H1 (cell line): ENCODE measurements at regions of chr1 and their contacts with region 1.

Region 1: DNA sequence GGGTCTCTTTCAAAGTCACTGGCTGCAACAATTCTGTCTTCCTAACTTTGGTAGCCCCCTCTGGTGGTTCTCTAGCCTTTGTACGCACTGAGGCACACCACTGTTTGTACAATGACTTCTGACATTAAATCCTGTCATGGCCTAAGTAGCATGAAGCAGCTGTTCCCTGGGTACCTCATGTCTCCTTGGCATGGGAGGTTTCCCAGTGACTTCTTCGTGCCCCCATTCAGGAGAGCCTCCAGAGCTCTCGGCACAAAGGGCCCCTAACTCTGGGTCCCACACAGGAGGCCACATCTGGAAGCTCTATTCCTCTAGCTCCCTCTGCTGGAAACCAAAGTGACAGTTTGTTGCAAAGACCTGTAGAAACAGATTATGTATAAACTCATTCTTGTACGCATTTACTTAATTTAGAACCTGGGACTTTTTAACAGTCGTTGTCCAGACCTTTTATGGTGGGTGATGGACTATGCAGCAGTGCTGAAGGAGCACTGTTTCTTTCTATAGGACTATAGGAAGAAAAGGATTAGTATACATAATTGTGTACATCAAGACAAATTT is 13.4 kb downstream of the SWT1 start:
- DNase-seq: peak; percentile 33 to 65
- H3K4me3 ChIP-seq: no peak overlapping the region
- H3K27ac ChIP-seq: no peak overlapping the region
- H3K4me1 ChIP-seq: peaks cover 0 to 5% (median 0%) of the 10 kb centered on the region in 4 experiments; a peak in 2 of 7 replicates
- H3K27me3 ChIP-seq: no peaks in the 10 kb centered on the region
- CTCF ChIP-seq: peak; percentile 35 to 63 (median 61)
- EP300 ChIP-seq: no peak
- POLR2A ChIP-seq: no peak
- RAD21 ChIP-seq: peak; percentile 58 to 73

Region 2: GRCh38 chr1:184805667-184806295 is 364.6 kb before region 1 on chr1:
- CTCF ChIA-PET with region 1: interaction called, 51 read pairs
- POLR2A ChIA-PET with region 1: no interaction called
- DNase-seq: peak; percentile 69 to 91
- H3K4me3 ChIP-seq: no peak overlapping the region
- H3K27ac ChIP-seq: no peak overlapping the region
- H3K4me1 ChIP-seq: no peaks in the 10 kb centered on the region
- H3K27me3 ChIP-seq: no peaks in the 10 kb centered on the region
- CTCF ChIP-seq: peak; percentile 87 to 96 (median 93)
- EP300 ChIP-seq: no peak
- POLR2A ChIP-seq: no peak
- RAD21 ChIP-seq: peak; percentile 98 to 100

Region 3: DNA sequence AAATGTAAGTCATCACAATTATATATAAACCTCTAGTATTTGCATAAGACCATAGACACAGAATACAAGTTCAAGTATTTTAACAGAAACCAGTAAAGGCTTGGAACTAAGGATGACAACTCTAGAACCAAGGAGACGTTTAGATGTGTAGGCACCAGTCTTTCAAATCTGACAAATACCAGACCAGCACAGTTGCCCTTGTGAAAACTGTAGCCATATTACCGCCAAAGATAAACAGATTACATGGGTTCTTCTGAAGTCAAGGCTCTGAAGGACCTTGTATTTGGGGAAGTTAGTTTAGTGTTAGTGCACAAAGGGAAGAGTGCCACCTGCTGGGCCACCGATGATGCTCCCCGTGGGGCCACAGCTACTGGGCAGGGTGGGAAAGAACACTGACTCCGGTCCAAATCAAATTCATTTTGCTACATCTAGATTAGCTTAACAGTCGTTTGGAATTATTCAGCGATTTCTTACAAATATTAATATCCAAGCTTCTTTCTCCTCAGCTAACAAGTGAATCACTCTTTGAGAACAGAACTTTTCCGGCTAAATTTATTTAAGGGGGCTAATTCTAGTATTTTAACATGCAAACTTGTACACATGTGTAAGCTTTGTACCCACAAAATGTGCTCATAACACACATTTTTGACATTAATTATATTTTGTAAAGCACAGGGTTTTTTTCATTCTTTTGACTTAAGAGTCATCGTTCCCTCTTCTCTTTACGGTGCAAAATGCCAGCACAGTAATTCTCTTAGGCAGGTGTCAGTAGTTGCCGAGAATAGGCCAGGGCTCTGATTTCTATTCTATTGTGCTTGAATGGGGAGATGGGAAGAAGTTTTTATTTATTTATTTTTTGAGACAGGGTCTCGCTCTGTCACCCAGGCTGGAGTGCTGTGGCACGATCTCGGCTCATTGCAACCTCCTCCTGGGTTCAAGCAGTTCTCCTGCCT is 188.1 kb before region 1 on chr1:
- CTCF ChIA-PET with region 1: interaction called, 12 read pairs
- POLR2A ChIA-PET with region 1: no interaction called
- DNase-seq: peak in 1 of 2 experiments; percentile 75
- H3K4me3 ChIP-seq: no peak overlapping the region
- H3K27ac ChIP-seq: no peak overlapping the region
- H3K4me1 ChIP-seq: no peaks in the 10 kb centered on the region
- H3K27me3 ChIP-seq: no peaks in the 10 kb centered on the region
- CTCF ChIP-seq: peak; percentile 74 to 82 (median 80)
- EP300 ChIP-seq: no peak
- POLR2A ChIP-seq: no peak
- RAD21 ChIP-seq: peak; percentile 88 to 94

Region 4: DNA sequence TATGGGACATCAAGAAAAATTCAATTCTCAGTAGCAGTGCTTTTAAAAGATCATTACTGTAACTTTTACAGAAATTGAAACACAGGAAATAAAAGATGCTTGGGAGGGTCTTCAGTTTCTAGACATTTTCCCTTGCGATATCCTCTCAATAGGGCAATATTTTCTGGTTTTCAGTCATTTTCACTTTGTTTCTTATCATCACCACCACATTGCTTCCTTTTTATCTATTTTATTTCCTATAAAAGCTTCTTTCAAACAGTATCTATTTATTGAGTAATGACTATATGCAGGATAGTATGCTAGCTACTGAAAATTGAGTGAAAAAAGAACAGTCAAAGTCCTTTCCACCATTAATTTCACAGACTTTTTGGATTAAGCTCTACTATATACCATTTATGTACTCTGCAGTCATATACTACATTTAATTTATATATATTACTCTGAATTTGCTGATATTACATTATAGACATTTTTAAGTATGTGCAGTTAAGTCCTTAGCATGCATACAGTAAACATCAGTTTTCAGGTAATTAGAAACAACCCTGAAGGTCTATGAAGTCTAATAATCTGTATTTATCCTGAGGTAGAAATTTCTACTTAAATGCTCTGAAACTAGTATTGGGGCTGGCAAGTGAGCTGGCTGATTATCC is 32.3 kb before region 1 on chr1:
- CTCF ChIA-PET with region 1: interaction called, 10 read pairs
- POLR2A ChIA-PET with region 1: no interaction called
- DNase-seq: no peak
- H3K4me3 ChIP-seq: no peak overlapping the region
- H3K27ac ChIP-seq: no peak overlapping the region
- H3K4me1 ChIP-seq: no peaks in the 10 kb centered on the region
- H3K27me3 ChIP-seq: no peaks in the 10 kb centered on the region
- CTCF ChIP-seq: no peak
- EP300 ChIP-seq: no peak
- POLR2A ChIP-seq: no peak
- RAD21 ChIP-seq: no peak

Region 5: GRCh38 chr1:185200889-185201288 is 30.5 kb after region 1 on chr1:
- CTCF ChIA-PET with region 1: interaction called, 12 read pairs
- POLR2A ChIA-PET with region 1: no interaction called
- DNase-seq: peak in 1 of 2 experiments; percentile 53
- H3K4me3 ChIP-seq: no peak overlapping the region
- H3K27ac ChIP-seq: no peak overlapping the region
- H3K4me1 ChIP-seq: no peaks in the 10 kb centered on the region
- H3K27me3 ChIP-seq: no peaks in the 10 kb centered on the region
- CTCF ChIP-seq: no peak
- EP300 ChIP-seq: no peak
- POLR2A ChIP-seq: no peak
- RAD21 ChIP-seq: no peak